Heart right ventricle (tissue), 16 donors: ENCODE measurements at regions of chr7 and their contacts with region 1.

Region 1: DNA sequence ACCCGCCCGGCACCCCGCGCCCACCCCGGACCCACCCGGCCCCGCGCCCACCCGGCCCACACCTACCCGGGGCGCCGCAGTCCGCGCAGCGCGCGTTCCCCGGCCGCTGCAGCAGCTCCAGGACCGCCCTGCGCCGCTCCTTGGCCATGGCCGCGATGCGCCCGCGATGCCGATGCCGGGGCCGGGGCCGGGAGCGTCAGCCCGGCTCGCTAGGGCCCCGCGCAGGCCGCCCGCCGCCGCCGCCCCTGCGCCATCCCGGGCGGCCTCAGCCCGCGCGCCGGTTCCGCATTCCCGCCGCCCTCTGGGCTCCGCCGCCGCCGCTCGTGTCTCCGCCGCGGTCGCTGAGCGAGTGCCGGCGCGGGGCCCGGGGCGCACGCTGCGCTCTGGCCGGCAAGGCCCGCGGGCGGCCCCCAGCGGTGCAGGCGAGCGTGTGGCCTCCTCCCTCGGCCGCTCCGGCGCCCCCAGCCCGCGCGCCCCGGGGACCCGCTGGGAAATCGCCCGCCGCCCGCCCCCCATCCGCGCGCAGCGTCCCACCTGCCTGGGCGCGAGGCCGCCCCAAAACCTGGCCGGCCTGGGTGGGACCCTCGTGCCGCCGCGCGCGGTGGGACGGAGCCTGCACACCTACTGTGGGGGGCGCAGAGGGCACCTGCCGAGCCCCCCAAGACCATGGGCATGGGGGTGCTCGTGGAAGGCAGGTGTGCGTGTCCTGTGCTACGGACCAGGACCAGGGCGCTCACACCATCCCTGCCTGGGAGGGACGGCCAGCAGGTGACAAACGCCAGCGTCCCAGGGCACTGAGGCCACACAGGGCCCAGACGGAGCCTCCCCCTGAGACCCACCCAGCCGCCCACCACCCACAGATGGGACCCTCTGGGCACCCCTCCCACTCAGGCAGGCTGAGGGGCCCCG is at the start of gene ADAP1:
- DNase-seq: peak in 1 of 2 donors; percentile 49
- ATAC-seq: peak in 5 of 8 donors; percentile 25 to 63 (median 31)
- H3K4me3 ChIP-seq: peak within 1 kb of the TSS; percentile 40 to 71 (median 60)
- H3K27ac ChIP-seq: peak within 1 kb of the TSS in 7 of 10 donors; percentile 33 to 91 (median 48)
- H3K4me1 ChIP-seq: peaks cover 4 to 39% (median 11%) of the 10 kb centered on the region in 9 donors
- H3K27me3 ChIP-seq: peaks cover 0 to 38% (median 22%) of the 10 kb centered on the region in 7 donors
- CTCF ChIP-seq: peak in 2 of 9 donors; percentile 34 to 40
- total RNA-seq, gene ADAP1: 5.2 to 14.9 (median 9.7) TPM

Region 2: GRCh38 chr7:909358-910329 is 44.9 kb before region 1 on chr7:
- intact Hi-C with region 1: loop called in 2 of 10 experiments (anchors 2 to 5 kb)
- DNase-seq: peak; percentile 62 to 68
- ATAC-seq: peak; percentile 20 to 87 (median 70)
- H3K4me3 ChIP-seq: peak overlapping the region in 9 of 10 donors; percentile 14 to 48 (median 37)
- H3K27ac ChIP-seq: peak overlapping the region in 3 of 10 donors; percentile 40 to 74 (median 44)
- H3K4me1 ChIP-seq: peaks cover 0 to 36% (median 5%) of the 10 kb centered on the region in 9 donors
- H3K27me3 ChIP-seq: peaks cover 0 to 10% (median 2%) of the 10 kb centered on the region in 7 donors
- CTCF ChIP-seq: no peak